Activated T-helper 1 cell treated with anti-CD3 and anti-CD28 coated beads, Interleukin-12 subunit alpha, Interleukin-12 subunit beta, Interleukin-2, Interleukin-4 antibody, amounts not matched to agents 30 ng/mL and 10 ng/mL and 1 ng/mL, durations not matched to agents 14 hours and 24 hours and 36 hours (primary cell): ENCODE measurements at regions of chr1 and their contacts with region 1.

Region 1: DNA sequence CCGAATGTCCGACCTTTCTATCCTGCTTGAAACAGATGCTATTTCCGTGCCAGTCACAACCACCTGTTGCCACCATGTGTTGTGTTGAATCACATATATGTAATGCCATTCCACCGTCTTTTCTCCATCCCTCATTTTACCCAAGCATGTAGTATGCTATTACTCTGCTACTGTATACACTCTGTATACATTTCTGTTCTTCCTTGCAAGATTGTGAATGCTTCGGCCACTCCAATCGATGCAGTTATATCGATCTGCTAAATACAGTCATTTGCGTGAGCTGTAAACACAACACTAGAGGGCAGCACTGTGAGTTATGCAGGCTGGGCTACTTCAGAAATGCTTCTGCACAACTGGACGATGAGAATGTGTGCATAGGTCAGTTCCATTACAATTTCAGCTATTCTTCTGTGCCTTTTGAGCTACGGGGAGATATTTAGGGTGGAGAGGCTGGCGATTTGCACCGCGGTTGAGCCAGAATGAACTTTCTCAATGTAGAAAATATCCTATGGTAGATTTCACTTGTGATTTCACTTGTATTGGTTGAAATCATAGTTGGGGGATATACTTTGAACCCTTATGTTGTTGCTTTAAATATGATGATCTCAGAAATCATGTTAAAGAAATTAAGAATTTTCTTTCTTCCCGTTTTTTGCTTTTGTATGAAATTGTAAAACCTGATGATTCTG is 289.8 kb downstream of the NTNG1 start:
- DNase-seq: peak; percentile 0
- H3K4me3 Mint-ChIP-seq: no peak overlapping the region
- H3K27ac Mint-ChIP-seq: no peak overlapping the region
- H3K4me1 Mint-ChIP-seq: no peaks in the 10 kb centered on the region
- H3K27me3 Mint-ChIP-seq: no peaks in the 10 kb centered on the region

Region 2: DNA sequence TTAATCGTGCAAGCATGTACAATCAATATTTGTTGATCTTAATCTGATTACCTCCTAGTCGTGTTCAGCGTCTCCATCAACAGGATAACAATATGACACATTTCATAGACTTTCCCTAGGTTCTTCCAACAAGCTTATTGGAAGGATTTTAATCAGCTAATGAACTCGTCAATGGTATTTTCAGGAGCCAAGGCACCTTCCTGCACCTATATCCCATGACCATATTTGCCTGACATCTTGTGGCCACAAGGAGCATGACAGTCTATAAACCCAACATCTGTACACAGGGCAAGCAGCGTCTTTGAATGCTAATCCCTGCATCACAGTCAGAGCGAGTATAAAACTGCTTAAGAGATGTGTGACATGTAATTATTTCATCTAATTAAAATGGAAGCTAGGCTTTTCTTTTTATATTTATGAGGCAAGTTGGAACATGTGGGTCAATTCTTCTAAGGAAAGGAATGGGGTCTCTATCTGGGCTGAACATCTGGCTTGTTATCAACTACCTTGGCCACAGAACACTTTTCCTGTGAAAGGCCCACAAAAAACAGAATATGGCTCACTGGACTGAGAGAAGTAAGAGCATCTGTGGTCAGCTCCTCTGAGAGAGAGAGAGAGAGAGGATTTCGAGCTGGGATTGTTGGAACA is 98.9 kb after region 1 on chr1:
- intact Hi-C with region 1: loop called (anchors 1 kb)
- DNase-seq: no peak
- H3K4me3 Mint-ChIP-seq: no peak overlapping the region
- H3K27ac Mint-ChIP-seq: no peak overlapping the region
- H3K4me1 Mint-ChIP-seq: peaks cover 8% of the 10 kb centered on the region
- H3K27me3 Mint-ChIP-seq: peaks cover 2% of the 10 kb centered on the region

Region 3: GRCh38 chr1:107750358-107750959 is 319.8 kb after region 1 on chr1:
- intact Hi-C with region 1: loop called (anchors 1 kb)
- DNase-seq: no peak
- H3K4me3 Mint-ChIP-seq: no peak overlapping the region
- H3K27ac Mint-ChIP-seq: no peak overlapping the region
- H3K4me1 Mint-ChIP-seq: no peaks in the 10 kb centered on the region
- H3K27me3 Mint-ChIP-seq: no peaks in the 10 kb centered on the region